B cell (primary cell): ENCODE measurements at regions of chr17 and their contacts with region 1.

Region 1: DNA sequence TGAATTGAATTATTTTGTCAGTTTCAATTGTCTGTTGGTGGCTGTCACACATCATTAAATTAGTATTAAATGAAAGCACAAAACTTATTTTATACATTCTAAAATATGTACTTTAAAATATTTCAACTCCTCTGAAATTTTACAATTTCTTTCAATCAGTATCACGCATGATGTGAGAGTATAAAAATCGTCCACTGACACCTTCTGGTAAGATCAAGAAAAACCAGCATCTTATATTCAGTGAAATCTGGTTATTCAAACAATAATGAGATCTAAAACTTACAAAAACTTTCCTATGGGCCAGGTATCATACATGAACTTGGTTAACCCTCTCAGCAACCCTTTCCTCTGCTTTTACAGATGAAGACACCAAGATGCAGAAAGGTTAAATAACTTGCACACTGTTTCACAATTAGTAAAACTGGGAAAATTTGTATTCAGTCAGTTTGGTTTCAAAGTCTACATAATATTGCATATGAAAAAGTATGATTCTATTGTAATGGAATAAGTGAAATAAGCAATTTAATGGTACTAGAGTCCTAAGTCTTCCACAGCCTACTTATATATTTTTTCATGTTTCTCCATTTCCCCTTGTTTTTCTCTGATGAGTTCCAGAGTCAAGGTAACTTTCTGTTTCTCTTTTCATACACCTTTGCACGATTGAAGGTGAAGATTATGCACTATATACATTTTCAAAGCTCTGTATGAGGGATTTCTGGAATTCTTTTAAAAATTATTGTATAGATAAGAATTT is 58.7 kb downstream of the EFCAB5 start:
- DNase-seq: no peak
- ATAC-seq: no peak
- H3K4me3 ChIP-seq: no peak overlapping the region
- H3K4me3 Mint-ChIP-seq: no peak overlapping the region
- H3K27ac ChIP-seq: no peak overlapping the region
- H3K27ac Mint-ChIP-seq: no peak overlapping the region
- H3K4me1 ChIP-seq: no peaks in the 10 kb centered on the region
- H3K4me1 Mint-ChIP-seq: peaks cover 3% of the 10 kb centered on the region
- H3K27me3 ChIP-seq: no peaks in the 10 kb centered on the region
- H3K27me3 Mint-ChIP-seq: no peaks in the 10 kb centered on the region
- CTCF ChIP-seq: no peak

Region 2: DNA sequence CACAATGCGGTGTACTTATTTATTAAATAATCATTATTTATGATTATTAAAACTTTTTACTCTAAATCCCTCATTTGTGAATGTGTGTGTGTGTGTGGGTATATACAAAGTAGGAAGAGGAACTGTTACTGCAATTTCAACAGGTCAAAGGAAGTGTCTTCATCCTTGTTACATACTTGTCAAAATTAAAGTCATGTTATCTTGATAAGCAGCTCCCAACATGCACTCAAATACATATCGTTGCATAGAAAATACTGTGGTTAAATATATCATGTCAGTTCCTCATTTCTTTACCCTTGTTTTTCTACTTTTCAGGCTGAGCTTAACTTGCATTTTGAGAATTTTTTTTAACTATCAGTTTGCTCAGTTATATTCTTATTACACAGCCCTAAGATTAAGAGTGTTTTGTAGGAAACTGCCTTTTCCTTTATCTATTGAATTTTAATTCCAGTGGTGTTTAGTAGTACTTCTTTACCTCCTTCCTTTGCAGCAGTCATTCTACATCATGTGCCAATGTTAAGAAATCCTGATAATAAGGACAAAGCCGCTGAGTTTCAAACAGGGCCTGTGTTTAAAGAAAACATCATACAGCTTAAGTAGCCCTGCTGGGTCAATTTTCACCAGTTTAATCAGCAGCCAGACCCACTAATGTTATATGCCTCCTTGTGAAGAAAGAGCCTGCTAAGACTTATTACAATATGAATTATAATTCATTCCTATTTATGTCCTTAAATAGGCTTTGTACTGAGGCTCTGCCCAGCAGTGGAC is 51.5 kb before region 1 on chr17:
- CTCF ChIA-PET with region 1: no interaction called
- POLR2A ChIA-PET with region 1: no interaction called
- intact Hi-C with region 1: loop called (anchors 10 kb)
- DNase-seq: peak; percentile 39
- ATAC-seq: peak; percentile 74
- H3K4me3 ChIP-seq: peak overlapping the region in 1 of 5 experiments; percentile 15
- H3K4me3 Mint-ChIP-seq: peak overlapping the region; percentile 11
- H3K27ac ChIP-seq: peak overlapping the region; percentile 25 to 67
- H3K27ac Mint-ChIP-seq: peak overlapping the region; percentile 77
- H3K4me1 ChIP-seq: peaks cover 25 to 32% of the 10 kb centered on the region in 2 donors
- H3K4me1 Mint-ChIP-seq: peaks cover 33% of the 10 kb centered on the region
- H3K27me3 ChIP-seq: no peaks in the 10 kb centered on the region
- H3K27me3 Mint-ChIP-seq: no peaks in the 10 kb centered on the region
- CTCF ChIP-seq: no peak

Region 3: GRCh38 chr17:30134551-30134950 is 134.4 kb after region 1 on chr17:
- CTCF ChIA-PET with region 1: no interaction called
- POLR2A ChIA-PET with region 1: no interaction called
- intact Hi-C with region 1: no loop called
- DNase-seq: no peak
- ATAC-seq: no peak
- H3K4me3 ChIP-seq: no peak overlapping the region
- H3K4me3 Mint-ChIP-seq: no peak overlapping the region
- H3K27ac ChIP-seq: no peak overlapping the region
- H3K27ac Mint-ChIP-seq: no peak overlapping the region
- H3K4me1 ChIP-seq: no peaks in the 10 kb centered on the region
- H3K4me1 Mint-ChIP-seq: peaks cover 13% of the 10 kb centered on the region
- H3K27me3 ChIP-seq: no peaks in the 10 kb centered on the region
- H3K27me3 Mint-ChIP-seq: no peaks in the 10 kb centered on the region
- CTCF ChIP-seq: no peak